Activated naive CD4-positive, alpha-beta T cell treated with anti-CD3 and anti-CD28 coated beads for 36 hours (primary cell): ENCODE measurements at regions of chr12 and their contacts with region 1.

Region 1: GRCh38 chr12:39443081-39443928 is at the start of gene KIF21A:
- DNase-seq: peak; percentile 86
- H3K4me3 Mint-ChIP-seq: peak within 1 kb of the TSS; percentile 85
- H3K27ac Mint-ChIP-seq: peak within 1 kb of the TSS; percentile 85
- H3K4me1 Mint-ChIP-seq: peaks cover 14% of the 10 kb centered on the region
- H3K27me3 Mint-ChIP-seq: no peaks in the 10 kb centered on the region
- total RNA-seq, gene KIF21A: 21.4 to 22.0 TPM

Region 2: GRCh38 chr12:39319187-39319586 is 124.1 kb before region 1 on chr12:
- CTCF ChIA-PET with region 1: no interaction called
- intact Hi-C with region 1: loop called (anchors 2 kb)
- DNase-seq: no peak
- H3K4me3 Mint-ChIP-seq: no peak overlapping the region
- H3K27ac Mint-ChIP-seq: no peak overlapping the region
- H3K4me1 Mint-ChIP-seq: no peaks in the 10 kb centered on the region
- H3K27me3 Mint-ChIP-seq: no peaks in the 10 kb centered on the region

Region 3: DNA sequence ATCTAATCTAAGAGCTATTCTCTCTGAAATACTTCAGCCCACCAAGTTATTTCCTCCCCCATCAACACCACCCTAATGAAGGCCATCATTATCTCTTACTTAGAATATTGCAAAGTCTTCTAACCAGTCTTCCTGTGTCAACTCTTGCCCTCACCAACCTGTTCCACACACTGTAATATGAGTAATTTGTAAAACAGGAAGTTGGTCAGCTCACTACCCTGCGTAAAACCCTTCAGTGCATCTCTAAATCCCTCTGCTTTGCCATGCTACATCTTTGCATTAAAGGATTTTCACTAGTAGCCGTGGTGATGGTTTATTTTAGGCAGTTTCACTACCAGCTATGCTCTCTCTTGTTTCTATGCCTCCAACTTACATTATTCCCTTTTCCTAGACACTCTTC is 70.4 kb before region 1 on chr12:
- CTCF ChIA-PET with region 1: interaction called, 5 read pairs
- intact Hi-C with region 1: loop called (anchors 2 kb)
- DNase-seq: peak; percentile 7
- H3K4me3 Mint-ChIP-seq: no peak overlapping the region
- H3K27ac Mint-ChIP-seq: no peak overlapping the region
- H3K4me1 Mint-ChIP-seq: peaks cover 7% of the 10 kb centered on the region
- H3K27me3 Mint-ChIP-seq: no peaks in the 10 kb centered on the region

Region 4: DNA sequence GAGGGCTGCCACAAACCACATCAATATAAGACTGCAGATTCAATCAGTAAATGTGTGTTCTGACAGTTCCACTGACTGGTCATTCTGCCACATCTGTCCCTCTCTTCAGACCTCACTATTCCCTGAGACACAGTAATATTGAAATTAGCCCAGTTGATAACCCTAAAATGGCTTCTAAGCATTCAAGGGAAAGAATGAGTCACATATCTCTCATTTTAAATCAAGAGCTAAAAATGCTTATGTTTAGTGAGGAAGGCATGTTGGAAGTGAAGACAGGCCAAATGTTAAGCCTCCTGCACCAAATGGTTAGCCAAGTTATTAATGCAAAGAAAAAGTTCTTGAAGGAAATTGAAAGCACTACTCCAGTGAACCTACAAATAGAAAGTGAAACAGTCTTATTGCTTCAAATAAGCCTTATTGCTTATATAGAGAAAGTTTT is 24.1 kb after region 1 on chr12:
- CTCF ChIA-PET with region 1: interaction called, 3 read pairs
- intact Hi-C with region 1: loop called (anchors 1 kb)
- DNase-seq: peak; percentile 32
- H3K4me3 Mint-ChIP-seq: no peak overlapping the region
- H3K27ac Mint-ChIP-seq: peak overlapping the region; percentile 46
- H3K4me1 Mint-ChIP-seq: peaks cover 18% of the 10 kb centered on the region
- H3K27me3 Mint-ChIP-seq: no peaks in the 10 kb centered on the region

Region 5: DNA sequence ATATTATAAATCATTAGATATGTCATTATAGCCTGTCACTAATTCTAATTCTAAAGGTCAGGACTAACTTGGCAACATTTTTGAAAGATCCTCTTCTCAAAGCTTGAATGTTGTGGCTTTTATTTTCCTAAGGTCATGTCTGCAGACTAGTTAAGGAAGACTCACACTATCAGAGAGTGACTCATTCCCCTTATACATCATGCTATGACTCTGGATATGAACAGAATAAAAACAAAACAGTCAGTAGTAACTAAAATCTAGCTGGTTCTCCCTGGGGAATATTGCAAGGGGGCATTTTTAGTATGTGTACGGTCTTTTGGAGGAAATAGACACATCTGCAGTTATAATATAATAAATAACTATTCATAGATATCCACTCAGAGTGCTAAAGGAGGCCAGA is 492.0 kb after region 1 on chr12:
- CTCF ChIA-PET with region 1: no interaction called
- intact Hi-C with region 1: no loop called
- DNase-seq: no peak
- H3K4me3 Mint-ChIP-seq: no peak overlapping the region
- H3K27ac Mint-ChIP-seq: no peak overlapping the region
- H3K4me1 Mint-ChIP-seq: no peaks in the 10 kb centered on the region
- H3K27me3 Mint-ChIP-seq: no peaks in the 10 kb centered on the region